SK-N-SH (cell line): ENCODE measurements at regions of chr19 and their contacts with region 1.

Region 1: DNA sequence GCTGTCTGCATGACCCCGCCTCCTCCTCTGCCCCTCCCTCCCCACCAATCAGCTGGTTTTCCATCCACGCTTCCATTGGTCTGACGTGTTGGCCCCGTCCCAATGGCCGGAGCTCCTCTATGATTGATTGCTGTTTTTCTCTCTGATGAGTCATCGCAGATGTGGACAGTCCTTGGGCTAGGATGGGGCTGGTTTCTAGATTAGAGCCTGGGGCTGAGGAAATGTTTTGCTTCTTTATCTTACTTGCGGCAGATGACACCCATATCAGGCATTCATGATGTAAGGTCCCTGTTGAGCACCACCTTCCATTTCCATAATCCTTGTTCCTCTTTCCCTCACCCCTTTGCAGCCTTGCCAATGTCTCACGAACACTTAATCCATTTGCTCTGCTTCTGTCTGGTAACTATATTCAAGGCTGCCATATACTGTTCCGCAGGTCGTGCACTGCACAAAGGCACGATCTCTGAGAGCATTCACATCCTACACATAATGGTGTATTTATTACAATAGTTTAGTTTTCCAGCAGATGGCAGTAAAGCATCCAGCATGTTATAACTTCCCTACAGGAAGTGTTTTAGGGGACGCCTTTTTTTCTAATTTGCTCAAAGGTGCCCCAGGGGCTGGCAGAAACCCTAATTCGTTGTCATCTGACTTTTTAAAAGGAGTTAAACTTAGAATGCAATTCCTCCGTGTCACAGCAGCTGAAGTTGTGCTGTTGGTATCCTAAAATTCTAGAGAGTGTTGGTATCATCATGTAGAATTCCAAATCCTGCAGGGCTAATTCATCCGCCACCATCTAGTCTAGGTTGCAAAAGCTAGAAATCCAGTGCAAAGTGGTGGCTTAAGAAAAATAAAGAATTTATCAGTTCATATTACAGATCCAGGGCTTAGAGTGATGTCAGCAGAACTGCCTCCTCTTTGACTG is 73.5 kb downstream of the MAP4K1 start:
- DNase-seq: peak; percentile 93
- H3K4me3 ChIP-seq: peak overlapping the region; percentile 52 to 56
- H3K27ac ChIP-seq: peak overlapping the region; percentile 71 to 92
- H3K4me1 ChIP-seq: peaks cover 4 to 17% of the 10 kb centered on the region in 2 experiments; a peak in 2 of 4 replicates
- H3K27me3 ChIP-seq: no peaks in the 10 kb centered on the region
- CTCF ChIP-seq: peak; percentile 73
- EP300 ChIP-seq: peak in 1 of 2 experiments; percentile 63; a peak in 1 of 4 replicates
- RAD21 ChIP-seq: peak; percentile 83

Region 2: GRCh38 chr19:38514812-38515633 is 29.3 kb before region 1 on chr19:
- CTCF ChIA-PET with region 1: interaction called, 10 read pairs
- POLR2A ChIA-PET with region 1: no interaction called
- DNase-seq: peak; percentile 94
- H3K4me3 ChIP-seq: peak overlapping the region in 1 of 2 experiments; percentile 38; a peak in 1 of 4 replicates
- H3K27ac ChIP-seq: no peak overlapping the region
- H3K4me1 ChIP-seq: peaks cover 0 to 3% of the 10 kb centered on the region in 2 experiments; a peak in 1 of 4 replicates
- H3K27me3 ChIP-seq: no peaks in the 10 kb centered on the region; the same call in 1 of the 2 replicates
- CTCF ChIP-seq: peak; percentile 83
- EP300 ChIP-seq: no peak
- RAD21 ChIP-seq: peak; percentile 89